Dendritic cell treated with granulocyte-macrophage colony-stimulating factor and Interleukin-4, amounts not matched to agents 40 ng/mL and 50 ng/mL, for 4 days (primary cell): ENCODE measurements at regions of chr17 and their contacts with region 1.

Region 1: GRCh38 chr17:38853292-38854219 is at the start of gene RPL23:
- H3K4me3 Mint-ChIP-seq: peak within 1 kb of the TSS; percentile 98
- H3K27ac Mint-ChIP-seq: peak within 1 kb of the TSS; percentile 97
- H3K4me1 Mint-ChIP-seq: peaks cover 58% of the 10 kb centered on the region
- H3K27me3 Mint-ChIP-seq: no peaks in the 10 kb centered on the region

Region 2: DNA sequence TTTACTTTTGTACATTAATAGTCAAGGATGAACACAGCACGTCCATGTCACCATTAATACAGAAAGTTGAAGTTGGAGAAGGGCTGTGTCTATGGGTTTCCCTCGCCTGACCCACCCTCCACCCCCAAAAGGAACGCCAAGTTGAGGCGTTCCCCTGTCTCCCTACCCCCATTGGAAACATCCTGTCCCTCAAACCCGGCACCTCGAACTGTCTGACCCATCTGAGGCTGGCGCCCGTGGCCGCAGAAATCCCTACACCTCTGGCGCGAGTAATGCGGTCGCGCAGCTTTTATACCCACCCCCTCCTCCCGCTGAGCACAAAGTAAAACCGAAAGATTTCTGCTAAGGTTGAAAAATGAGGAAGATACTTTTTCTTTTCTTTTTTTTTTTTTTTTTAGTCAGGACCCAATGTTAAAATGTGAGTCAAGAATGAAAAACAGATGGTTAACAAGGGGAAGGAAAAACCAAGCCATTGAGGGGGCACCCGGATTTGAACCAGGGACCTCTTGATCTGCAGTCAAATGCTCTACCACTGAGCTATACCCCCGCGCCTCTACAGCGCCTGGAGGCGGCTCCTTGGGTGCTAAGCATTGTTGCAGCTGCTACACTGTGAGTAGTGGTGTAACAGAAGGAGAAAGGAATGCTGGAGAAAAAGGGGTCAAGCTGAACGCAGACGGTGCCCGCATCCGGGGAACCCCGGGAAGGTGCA is 15.4 kb after region 1 on chr17:
- intact Hi-C with region 1: loop called (anchors 1 kb)
- H3K4me3 Mint-ChIP-seq: peak overlapping the region; percentile 100
- H3K27ac Mint-ChIP-seq: peak overlapping the region; percentile 97
- H3K4me1 Mint-ChIP-seq: peaks cover 50% of the 10 kb centered on the region
- H3K27me3 Mint-ChIP-seq: peaks cover 3% of the 10 kb centered on the region